Heart left ventricle (tissue), 16 donors: ENCODE measurements at regions of chr4 and their contacts with region 1.

Region 1: GRCh38 chr4:185597532-185598188 is 62.4 kb upstream of the PDLIM3 start:
- DNase-seq: peak; percentile 71 to 82 (median 74)
- ATAC-seq: peak in 3 of 4 donors; percentile 33 to 54 (median 38)
- H3K4me3 ChIP-seq: no peak overlapping the region
- H3K27ac ChIP-seq: peak overlapping the region in 10 of 12 donors; percentile 6 to 79 (median 43)
- H3K4me1 ChIP-seq: peaks cover 0 to 49% (median 20%) of the 10 kb centered on the region in 12 donors
- H3K27me3 ChIP-seq: no peaks in the 10 kb centered on the region
- CTCF ChIP-seq: peak; percentile 96 to 100 (median 99)
- POLR2A ChIP-seq: no peak

Region 2: GRCh38 chr4:185203486-185204237 is 394.0 kb before region 1 on chr4 and contains the start of gene CFAP97:
- intact Hi-C with region 1: loop called in 1 of 10 experiments (anchors 10 kb)
- DNase-seq: peak; percentile 93 to 96 (median 94)
- ATAC-seq: peak; percentile 91 to 96 (median 94)
- H3K4me3 ChIP-seq: peak within 1 kb of the TSS; percentile 59 to 93 (median 84)
- H3K27ac ChIP-seq: peak within 1 kb of the TSS; percentile 88 to 99 (median 97)
- H3K4me1 ChIP-seq: peaks cover 6 to 36% (median 23%) of the 10 kb centered on the region in 12 donors
- H3K27me3 ChIP-seq: no peaks in the 10 kb centered on the region
- CTCF ChIP-seq: peak in 3 of 12 donors; percentile 7 to 26 (median 21)
- POLR2A ChIP-seq: peak in 1 of 2 donors; percentile 70
- total RNA-seq, gene CFAP97: 9.7 to 22.7 (median 14.5) TPM

Region 3: DNA sequence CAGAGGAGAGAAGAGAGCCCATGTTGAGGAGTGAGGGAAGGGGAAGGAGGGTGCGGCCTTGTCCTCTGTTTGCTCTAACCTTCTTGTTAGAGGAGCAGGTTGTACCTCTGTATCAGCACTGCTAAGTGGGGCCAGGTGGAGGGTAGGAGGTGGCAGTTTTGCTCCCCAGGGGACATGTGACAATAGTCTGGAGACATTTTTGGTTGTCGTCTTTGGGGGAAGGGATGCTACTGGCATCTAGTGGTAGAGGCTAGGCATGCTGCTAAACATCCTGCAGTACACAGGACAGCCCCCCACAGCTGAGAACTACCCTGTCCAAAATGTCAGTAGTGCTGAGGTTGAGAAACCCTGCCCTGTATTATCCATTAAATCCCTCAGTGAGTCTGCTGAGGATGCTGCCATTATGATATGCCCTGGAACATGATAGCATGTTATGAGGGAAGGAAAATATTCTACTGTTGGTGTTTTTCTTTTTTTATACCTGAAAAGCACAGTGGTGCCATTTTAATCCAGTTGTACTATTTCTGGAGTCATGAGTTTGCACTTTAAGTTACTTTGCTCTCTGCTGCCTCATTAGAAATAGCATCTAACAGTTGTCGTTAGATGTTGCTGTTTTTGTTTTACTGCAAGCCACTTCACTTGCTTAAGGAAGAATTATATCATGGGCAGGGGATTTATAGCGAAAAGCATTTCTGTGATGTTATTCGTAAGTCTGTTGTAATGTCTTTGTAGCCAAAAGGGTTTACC is 292.5 kb before region 1 on chr4:
- intact Hi-C with region 1: loop called in 1 of 10 experiments (anchors 5 kb)
- DNase-seq: no peak
- ATAC-seq: peak; percentile 35 to 82 (median 55)
- H3K4me3 ChIP-seq: no peak overlapping the region
- H3K27ac ChIP-seq: no peak overlapping the region
- H3K4me1 ChIP-seq: peaks cover 0 to 8% (median 0%) of the 10 kb centered on the region in 12 donors
- H3K27me3 ChIP-seq: no peaks in the 10 kb centered on the region
- CTCF ChIP-seq: peak in 11 of 12 donors; percentile 23 to 61 (median 43)
- POLR2A ChIP-seq: no peak

Region 4: GRCh38 chr4:185425647-185426352 is 171.9 kb before region 1 on chr4 and contains the start of gene UFSP2:
- intact Hi-C with region 1: loop called in 5 of 10 experiments (anchors 5 to 10 kb)
- DNase-seq: peak; percentile 89 to 94 (median 90)
- ATAC-seq: peak; percentile 96 to 98 (median 97)
- H3K4me3 ChIP-seq: peak within 1 kb of the TSS; percentile 73 to 96 (median 80)
- H3K27ac ChIP-seq: peak within 1 kb of the TSS; percentile 84 to 99 (median 96)
- H3K4me1 ChIP-seq: peaks cover 0 to 41% (median 28%) of the 10 kb centered on the region in 12 donors
- H3K27me3 ChIP-seq: no peaks in the 10 kb centered on the region
- CTCF ChIP-seq: no peak
- POLR2A ChIP-seq: peak in 1 of 2 donors; percentile 82
- total RNA-seq, gene UFSP2: 25.2 to 52.4 (median 35.1) TPM

Region 5: DNA sequence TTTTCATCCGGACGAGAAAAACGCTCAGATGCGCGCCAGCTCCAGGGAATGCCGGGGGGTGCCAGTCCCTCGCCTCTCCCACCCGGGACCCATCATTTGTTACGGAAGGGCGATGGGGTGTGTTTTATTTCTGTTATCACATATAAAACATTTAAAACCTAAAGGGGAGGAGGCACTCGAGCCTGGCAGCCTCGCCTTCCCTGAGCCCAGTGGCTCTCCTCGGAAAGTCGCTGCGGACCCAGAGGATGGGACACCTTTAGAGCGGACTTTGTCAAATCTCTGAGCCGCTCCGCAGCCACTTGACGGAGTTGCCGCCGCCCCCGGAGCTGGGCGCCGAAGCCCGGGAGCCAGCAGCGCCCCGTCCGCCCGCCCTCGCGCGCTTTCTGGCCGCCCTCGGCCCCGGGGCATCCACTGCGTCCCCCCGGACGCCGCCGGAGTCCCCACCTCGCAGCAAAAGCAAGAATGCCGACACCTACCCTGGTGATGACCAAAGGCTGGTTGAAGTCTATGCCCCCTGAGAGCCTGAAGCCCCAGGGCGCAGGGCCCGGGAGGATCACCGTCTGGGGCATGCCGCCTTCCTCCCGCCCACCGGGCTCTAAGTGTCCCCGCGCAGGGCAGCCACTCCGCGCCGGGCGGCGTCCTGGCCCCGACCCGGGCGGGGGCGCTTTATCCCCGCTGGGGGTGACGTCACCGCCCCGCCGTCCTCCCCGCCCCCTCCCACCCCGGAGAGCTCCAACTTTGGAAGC is 62.6 kb before region 1 on chr4 and contains the start of gene PDLIM3:
- intact Hi-C with region 1: loop called in 4 of 10 experiments (anchors 2 to 10 kb)
- DNase-seq: peak; percentile 55 to 87 (median 83)
- ATAC-seq: peak; percentile 51 to 89 (median 80)
- H3K4me3 ChIP-seq: peak within 1 kb of the TSS; percentile 67 to 98 (median 84)
- H3K27ac ChIP-seq: peak within 1 kb of the TSS; percentile 84 to 99 (median 97)
- H3K4me1 ChIP-seq: peaks cover 0 to 38% (median 5%) of the 10 kb centered on the region in 12 donors
- H3K27me3 ChIP-seq: peaks cover 0 to 24% (median 0%) of the 10 kb centered on the region in 9 donors
- CTCF ChIP-seq: peak in 1 of 12 donors; percentile 20
- POLR2A ChIP-seq: peak; percentile 93 to 99
- total RNA-seq, gene PDLIM3: 111 to 1,156 (median 246) TPM

Region 6: DNA sequence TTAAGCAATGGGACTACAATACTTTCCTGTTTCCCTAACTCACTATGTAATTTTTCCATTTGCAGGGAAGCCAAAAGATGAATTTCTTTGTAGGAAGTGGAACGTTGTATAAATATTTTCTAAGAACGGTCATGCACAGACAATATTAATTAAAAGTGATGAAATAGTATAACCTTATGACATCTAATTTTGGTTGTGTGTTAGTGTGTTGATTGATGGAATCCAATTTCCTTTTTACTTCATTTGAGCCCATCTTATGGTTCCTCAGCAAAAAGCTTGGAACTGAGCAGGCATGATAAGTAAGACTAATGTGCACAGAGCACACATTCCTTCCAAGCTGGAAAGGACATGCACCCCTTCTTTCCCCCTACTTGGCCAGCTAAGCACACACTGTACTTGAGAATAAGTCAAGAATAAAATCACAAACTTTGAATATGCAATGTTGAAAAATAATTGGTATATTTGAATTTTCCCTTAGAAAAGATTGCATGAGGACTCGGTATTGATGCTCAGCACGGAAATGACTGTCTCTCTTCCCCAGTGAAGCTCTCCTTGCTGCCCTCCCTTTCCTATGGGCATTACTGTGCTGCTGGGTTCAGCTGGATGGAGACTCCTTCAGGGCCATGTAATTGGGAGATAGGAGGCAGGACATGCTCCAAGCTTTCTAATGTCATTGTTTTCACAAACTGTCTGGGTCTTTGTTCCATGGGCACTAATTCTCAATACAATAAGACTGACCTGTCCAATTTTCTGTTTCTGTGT is 43.1 kb before region 1 on chr4:
- intact Hi-C with region 1: no loop called
- DNase-seq: no peak
- ATAC-seq: peak; percentile 38 to 75 (median 50)
- H3K4me3 ChIP-seq: no peak overlapping the region
- H3K27ac ChIP-seq: peak overlapping the region in 2 of 12 donors; percentile 31 to 59
- H3K4me1 ChIP-seq: peaks cover 0 to 18% (median 0%) of the 10 kb centered on the region in 12 donors
- H3K27me3 ChIP-seq: no peaks in the 10 kb centered on the region
- CTCF ChIP-seq: no peak
- POLR2A ChIP-seq: no peak

Region 7: GRCh38 chr4:185672618-185673017 is 75.0 kb after region 1 on chr4:
- intact Hi-C with region 1: no loop called
- DNase-seq: no peak
- ATAC-seq: peak in 2 of 4 donors; percentile 34 to 50
- H3K4me3 ChIP-seq: no peak overlapping the region
- H3K27ac ChIP-seq: peak overlapping the region in 11 of 12 donors; percentile 1 to 71 (median 33)
- H3K4me1 ChIP-seq: peaks cover 0 to 59% (median 24%) of the 10 kb centered on the region in 12 donors
- H3K27me3 ChIP-seq: no peaks in the 10 kb centered on the region
- CTCF ChIP-seq: no peak
- POLR2A ChIP-seq: no peak